ENCODE measurements at regions of chr2 and their contacts with region 1.

Region 1: GRCh38 chr2:18749912-18750526 is 160.7 kb upstream of the NT5C1B start:
- DNase-seq: peak; percentile 47 to 51
- H3K4me3 ChIP-seq: no peak overlapping the region
- H3K27ac ChIP-seq: no peak overlapping the region
- H3K4me1 ChIP-seq: peaks cover 31% of the 10 kb centered on the region
- H3K27me3 ChIP-seq: no peaks in the 10 kb centered on the region
- CTCF ChIP-seq: peak; percentile 95

Region 2: GRCh38 chr2:18520451-18521425 is 229.3 kb before region 1 on chr2:
- CTCF ChIA-PET with region 1: no interaction called
- POLR2A ChIA-PET with region 1: no interaction called
- intact Hi-C with region 1: loop called (anchors 5 kb)
- DNase-seq: peak; percentile 56 to 73
- H3K4me3 ChIP-seq: no peak overlapping the region
- H3K27ac ChIP-seq: no peak overlapping the region
- H3K4me1 ChIP-seq: 0 out of 2 replicates have a peak, but pooled peaks cover 12% of the 10 kb centered on the region
- H3K27me3 ChIP-seq: no peaks in the 10 kb centered on the region
- CTCF ChIP-seq: peak; percentile 97

Region 3: DNA sequence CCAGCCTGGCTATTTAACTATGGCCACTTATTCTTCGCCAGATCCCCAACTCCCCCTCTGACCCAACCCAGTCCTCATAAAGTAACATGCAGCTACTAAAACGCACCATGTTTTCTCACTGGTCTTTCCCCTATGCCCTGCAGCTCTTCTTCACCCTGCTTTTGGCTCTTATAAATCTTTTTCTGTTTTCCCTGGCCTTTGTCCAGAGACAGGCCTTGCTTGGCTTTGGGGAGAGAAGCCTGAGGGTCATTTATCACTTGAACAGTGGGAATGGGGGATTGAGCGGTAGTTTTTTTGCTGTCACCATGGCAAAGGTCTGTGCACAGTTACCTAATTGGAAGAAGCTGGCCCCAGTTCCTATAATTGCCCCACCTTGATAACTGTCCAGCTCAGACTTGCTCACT is 42.2 kb after region 1 on chr2:
- CTCF ChIA-PET with region 1: no interaction called
- POLR2A ChIA-PET with region 1: no interaction called
- intact Hi-C with region 1: no loop called
- DNase-seq: no peak
- H3K4me3 ChIP-seq: no peak overlapping the region
- H3K27ac ChIP-seq: no peak overlapping the region
- H3K4me1 ChIP-seq: no peaks in the 10 kb centered on the region
- H3K27me3 ChIP-seq: no peaks in the 10 kb centered on the region
- CTCF ChIP-seq: no peak

Region 4: DNA sequence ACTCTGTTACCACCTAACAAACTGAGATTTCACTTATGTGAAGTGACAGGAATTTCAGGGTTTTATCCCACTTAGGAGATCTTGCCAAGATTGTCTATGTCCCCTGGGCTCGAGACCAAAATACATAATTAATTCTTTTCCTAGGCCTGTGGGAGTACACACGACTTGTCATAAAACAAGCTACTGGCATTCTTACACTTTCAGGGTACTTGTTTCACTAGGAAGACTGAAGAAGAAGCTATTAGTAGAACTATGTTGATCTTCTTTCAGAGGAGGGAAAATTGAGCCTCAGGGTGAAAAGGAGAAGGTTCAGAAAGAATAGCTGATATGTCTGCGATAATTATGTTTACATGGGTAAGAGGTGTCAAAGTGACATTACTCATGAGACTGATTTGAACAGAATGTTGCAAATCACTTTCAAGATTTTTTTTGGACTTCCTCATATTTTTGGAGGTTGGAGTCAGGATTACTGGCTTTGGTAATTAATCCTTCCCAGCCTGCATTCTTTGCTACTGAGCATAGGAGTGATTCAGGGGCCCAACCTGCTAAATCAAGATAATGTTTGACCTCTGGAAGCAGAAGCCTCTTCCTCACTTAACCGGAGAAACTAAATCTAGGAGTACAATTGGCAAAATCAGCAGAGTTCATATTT is 79.4 kb after region 1 on chr2:
- CTCF ChIA-PET with region 1: interaction called, 3 read pairs
- POLR2A ChIA-PET with region 1: no interaction called
- intact Hi-C with region 1: loop called (anchors 2 kb)
- DNase-seq: peak; percentile 55 to 99
- H3K4me3 ChIP-seq: peak overlapping the region; percentile 15; the same call in 1 of the 2 replicates
- H3K27ac ChIP-seq: peak overlapping the region; percentile 82
- H3K4me1 ChIP-seq: peaks cover 86% of the 10 kb centered on the region
- H3K27me3 ChIP-seq: no peaks in the 10 kb centered on the region
- CTCF ChIP-seq: no peak

Region 5: GRCh38 chr2:19801367-19802080 is 1051.5 kb after region 1 on chr2:
- CTCF ChIA-PET with region 1: no interaction called
- POLR2A ChIA-PET with region 1: no interaction called
- intact Hi-C with region 1: loop called (anchors 5 kb)
- DNase-seq: peak; percentile 96
- H3K4me3 ChIP-seq: peak overlapping the region; percentile 15; the same call in 1 of the 2 replicates
- H3K27ac ChIP-seq: peak overlapping the region; percentile 47
- H3K4me1 ChIP-seq: peaks cover 51% of the 10 kb centered on the region
- H3K27me3 ChIP-seq: no peaks in the 10 kb centered on the region
- CTCF ChIP-seq: no peak

Measured in PC-9 (cell line).